Heart right ventricle (tissue), 16 donors: ENCODE measurements at regions of chr3 and their contacts with region 1.

Region 1: DNA sequence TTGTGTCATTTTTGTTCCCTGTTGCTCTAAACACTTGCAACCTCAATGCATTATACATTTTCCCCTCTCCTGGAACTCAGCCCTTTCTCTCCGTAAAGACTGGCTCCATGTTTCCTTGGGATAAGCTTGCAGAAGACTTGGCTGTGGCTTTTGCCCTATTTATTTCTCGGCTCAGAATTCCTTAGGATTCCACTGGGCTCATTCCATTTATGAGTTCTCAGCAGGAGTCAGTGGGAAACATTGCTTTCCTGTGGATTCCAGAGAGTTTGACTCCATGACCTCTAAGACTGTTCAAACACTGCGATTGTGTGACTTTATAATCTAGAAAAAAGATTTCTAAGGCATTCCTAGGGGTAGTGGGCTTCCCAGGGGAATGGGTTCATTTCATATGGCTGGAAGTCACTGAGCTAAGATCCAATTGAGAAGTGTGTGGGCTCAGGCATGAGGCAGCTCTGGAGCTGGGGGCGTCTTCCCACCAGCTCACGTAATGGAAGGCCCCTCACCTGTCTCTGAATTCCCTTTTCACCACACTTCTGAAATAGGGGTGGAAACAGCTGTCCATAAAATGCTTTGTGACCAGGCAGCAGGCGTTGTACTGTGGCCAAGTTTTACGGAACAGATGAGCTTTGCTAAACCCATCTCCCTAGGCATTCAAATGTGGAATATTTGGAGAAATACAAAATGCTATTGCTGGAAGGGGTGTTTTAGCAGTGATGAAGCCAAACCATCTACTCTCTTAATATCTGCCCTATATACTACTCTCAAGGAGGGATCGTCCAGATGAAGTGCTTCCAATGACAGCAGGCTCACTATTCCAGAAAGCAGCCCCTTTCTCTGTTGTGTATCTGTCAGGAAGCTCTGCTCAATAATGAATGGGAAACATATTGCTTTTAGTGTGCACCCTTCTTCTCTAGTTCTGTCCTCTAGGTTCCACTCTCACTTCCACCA is 91.8 kb upstream of the BCL6 start:
- DNase-seq: no peak
- ATAC-seq: no peak
- H3K4me3 ChIP-seq: no peak overlapping the region
- H3K27ac ChIP-seq: no peak overlapping the region
- H3K4me1 ChIP-seq: no peaks in the 10 kb centered on the region
- H3K27me3 ChIP-seq: no peaks in the 10 kb centered on the region
- CTCF ChIP-seq: no peak

Region 2: DNA sequence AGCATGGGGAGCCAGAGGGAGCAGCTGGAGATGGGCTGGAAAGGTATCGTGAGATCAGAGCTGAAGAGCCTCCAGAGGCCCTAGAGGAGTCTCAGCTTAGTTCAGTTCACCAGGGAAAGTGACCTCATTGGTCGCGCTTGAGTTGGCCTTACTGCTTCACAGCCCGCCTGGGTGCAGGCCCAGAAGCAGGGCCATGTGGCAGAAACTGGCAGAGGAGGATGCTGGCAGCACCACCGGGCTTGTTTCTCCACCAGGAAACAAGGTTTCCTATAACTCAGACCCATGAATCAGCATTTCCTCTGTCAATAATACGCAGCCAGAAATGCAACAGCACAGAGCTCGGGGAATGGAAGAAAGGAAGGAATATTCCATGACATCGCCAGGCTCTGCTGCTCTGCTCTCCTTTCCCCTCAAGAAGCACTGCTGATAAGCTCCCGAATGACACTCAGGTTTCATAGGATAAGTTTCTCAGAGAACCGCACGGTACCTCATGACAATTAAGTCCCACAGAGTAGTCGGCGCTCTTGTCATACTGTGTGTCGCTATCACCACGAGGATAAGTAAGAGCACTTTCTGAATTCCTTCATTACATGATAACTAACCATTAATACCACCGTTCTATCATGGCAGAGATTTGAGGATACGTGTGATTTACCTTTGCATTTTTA is 169.8 kb after region 1 on chr3:
- intact Hi-C with region 1: no loop called
- DNase-seq: peak; percentile 35 to 40
- ATAC-seq: peak; percentile 75 to 93 (median 88)
- H3K4me3 ChIP-seq: no peak overlapping the region
- H3K27ac ChIP-seq: peak overlapping the region in 7 of 10 donors; percentile 2 to 71 (median 42)
- H3K4me1 ChIP-seq: peaks cover 0 to 26% (median 0%) of the 10 kb centered on the region in 9 donors
- H3K27me3 ChIP-seq: no peaks in the 10 kb centered on the region
- CTCF ChIP-seq: no peak

Region 3: GRCh38 chr3:189157232-189158007 is 1320.3 kb after region 1 on chr3:
- intact Hi-C with region 1: loop called in 1 of 10 experiments (anchors 10 kb)
- DNase-seq: no peak
- ATAC-seq: no peak
- H3K4me3 ChIP-seq: no peak overlapping the region
- H3K27ac ChIP-seq: no peak overlapping the region
- H3K4me1 ChIP-seq: no peaks in the 10 kb centered on the region
- H3K27me3 ChIP-seq: peaks cover 0 to 4% (median 0%) of the 10 kb centered on the region in 7 donors
- CTCF ChIP-seq: no peak